ENCODE measurements at regions of chr15 and their contacts with region 1.

Region 1: DNA sequence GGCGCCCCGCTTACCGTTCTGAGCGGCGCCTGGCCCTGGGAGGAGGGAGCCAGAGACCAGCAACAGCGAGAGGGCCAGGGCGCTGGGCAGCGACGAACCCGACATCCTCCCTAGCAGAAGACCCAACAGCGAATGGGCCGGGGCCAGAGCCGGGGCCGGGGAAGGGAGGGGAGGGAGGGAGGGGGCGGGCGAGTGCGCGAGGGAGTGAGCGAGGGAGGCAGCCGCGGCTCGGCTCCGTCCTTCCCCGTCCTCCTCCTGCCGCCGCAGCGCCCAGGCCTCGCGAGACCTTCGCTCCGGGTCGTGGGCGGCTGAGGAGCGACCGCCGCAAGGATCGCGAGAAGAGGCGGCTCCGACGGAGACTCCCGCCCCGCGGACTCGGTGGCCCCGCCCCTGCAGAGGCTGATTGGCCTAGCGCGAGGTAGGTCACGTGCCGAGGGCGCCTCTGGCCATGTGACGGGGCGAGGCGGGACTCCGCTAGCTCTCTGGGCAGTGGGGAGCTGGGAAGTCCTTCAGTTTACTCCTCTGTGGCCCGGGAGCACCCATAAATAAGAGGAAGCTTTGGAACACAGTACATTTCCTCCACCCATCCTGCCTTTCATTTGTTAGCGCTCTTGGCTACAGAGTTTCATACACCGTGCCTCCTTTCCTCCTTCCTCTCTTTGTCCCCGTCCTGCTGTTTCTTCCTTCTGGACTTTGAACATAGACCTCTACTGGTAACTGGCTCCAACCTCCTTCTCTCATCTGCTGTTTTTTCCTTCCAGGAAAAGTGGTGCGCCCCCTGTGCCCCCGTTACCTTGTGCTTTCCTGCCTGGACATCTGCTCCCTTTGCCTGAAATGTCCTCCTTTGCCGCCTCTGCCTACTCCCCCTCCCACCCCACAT is at the start of gene NPTN:
- DNase-seq: peak; percentile 96 to 98
- ATAC-seq: peak; percentile 87 to 94
- H3K4me3 ChIP-seq: peak within 1 kb of the TSS; percentile 96
- H3K27ac ChIP-seq: peak within 1 kb of the TSS; percentile 95 to 96
- H3K4me1 ChIP-seq: peaks cover 51% of the 10 kb centered on the region
- CTCF ChIP-seq: peak; percentile 13; the same call in 1 of the 3 replicates
- EP300 ChIP-seq: no peak
- POLR2A ChIP-seq: peak; percentile 87
- RAD21 ChIP-seq: no peak
- polyA plus RNA-seq, gene NPTN: 201 and 253 TPM in 2 replicates

Region 2: DNA sequence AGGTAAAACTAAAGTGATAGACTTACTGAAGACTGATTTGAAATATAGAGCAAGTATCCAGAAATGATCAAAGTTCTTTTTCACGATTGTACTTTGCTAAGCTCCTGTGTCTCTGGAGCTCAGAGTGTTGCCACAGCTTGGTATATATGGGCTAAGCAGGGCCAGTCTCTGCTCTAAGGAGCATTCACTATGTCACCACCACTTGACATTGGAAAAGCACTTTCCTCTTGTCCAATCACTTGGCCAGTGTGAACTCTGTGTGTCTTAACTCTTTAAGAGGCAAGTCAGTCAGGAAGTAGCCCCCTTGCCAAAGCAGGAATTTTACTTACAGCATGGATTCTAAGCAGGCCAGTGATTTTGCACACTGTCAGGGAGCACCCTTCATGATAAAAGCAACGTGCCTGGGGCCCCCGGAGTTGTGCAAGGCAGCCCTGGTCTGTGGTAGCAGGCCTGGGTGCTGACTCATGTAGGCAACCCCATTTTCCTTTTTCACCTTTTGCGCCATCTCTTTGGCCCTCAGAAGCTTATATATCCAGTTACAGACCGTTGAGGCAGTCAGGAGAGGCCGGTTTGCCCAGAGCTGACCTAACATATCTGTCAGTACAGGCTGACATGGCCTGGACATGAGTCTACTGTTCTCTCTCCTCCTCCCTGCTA is 337.6 kb before region 1 on chr15:
- CTCF ChIA-PET with region 1: interaction called, 10 read pairs
- POLR2A ChIA-PET with region 1: no interaction called
- DNase-seq: no peak
- ATAC-seq: 0 out of 6 replicates have a peak, but pooled peaks of 1 of the 2 experiments have one; percentile 33
- H3K4me3 ChIP-seq: no peak overlapping the region
- H3K27ac ChIP-seq: no peak overlapping the region
- H3K4me1 ChIP-seq: no peaks in the 10 kb centered on the region
- CTCF ChIP-seq: no peak
- EP300 ChIP-seq: no peak
- POLR2A ChIP-seq: no peak
- RAD21 ChIP-seq: no peak

Region 3: GRCh38 chr15:73560501-73561117 is 72.7 kb before region 1 on chr15:
- CTCF ChIA-PET with region 1: interaction called, 211 read pairs
- POLR2A ChIA-PET with region 1: interaction called, 5 read pairs
- DNase-seq: peak; percentile 30 to 80
- ATAC-seq: peak; percentile 74 to 88; a peak in 5 of 6 replicates
- H3K4me3 ChIP-seq: no peak overlapping the region
- H3K27ac ChIP-seq: no peak overlapping the region
- H3K4me1 ChIP-seq: 0 out of 3 replicates have a peak, but pooled peaks cover 6% of the 10 kb centered on the region
- CTCF ChIP-seq: peak; percentile 87
- EP300 ChIP-seq: no peak
- POLR2A ChIP-seq: no peak
- RAD21 ChIP-seq: peak; percentile 83 to 88

Region 4: GRCh38 chr15:73593304-73594074 is 39.9 kb before region 1 on chr15:
- CTCF ChIA-PET with region 1: interaction called, 51 read pairs
- POLR2A ChIA-PET with region 1: no interaction called
- DNase-seq: no peak
- ATAC-seq: no peak
- H3K4me3 ChIP-seq: no peak overlapping the region
- H3K27ac ChIP-seq: no peak overlapping the region
- H3K4me1 ChIP-seq: no peaks in the 10 kb centered on the region
- CTCF ChIP-seq: no peak
- EP300 ChIP-seq: no peak
- POLR2A ChIP-seq: no peak
- RAD21 ChIP-seq: no peak

Region 5: DNA sequence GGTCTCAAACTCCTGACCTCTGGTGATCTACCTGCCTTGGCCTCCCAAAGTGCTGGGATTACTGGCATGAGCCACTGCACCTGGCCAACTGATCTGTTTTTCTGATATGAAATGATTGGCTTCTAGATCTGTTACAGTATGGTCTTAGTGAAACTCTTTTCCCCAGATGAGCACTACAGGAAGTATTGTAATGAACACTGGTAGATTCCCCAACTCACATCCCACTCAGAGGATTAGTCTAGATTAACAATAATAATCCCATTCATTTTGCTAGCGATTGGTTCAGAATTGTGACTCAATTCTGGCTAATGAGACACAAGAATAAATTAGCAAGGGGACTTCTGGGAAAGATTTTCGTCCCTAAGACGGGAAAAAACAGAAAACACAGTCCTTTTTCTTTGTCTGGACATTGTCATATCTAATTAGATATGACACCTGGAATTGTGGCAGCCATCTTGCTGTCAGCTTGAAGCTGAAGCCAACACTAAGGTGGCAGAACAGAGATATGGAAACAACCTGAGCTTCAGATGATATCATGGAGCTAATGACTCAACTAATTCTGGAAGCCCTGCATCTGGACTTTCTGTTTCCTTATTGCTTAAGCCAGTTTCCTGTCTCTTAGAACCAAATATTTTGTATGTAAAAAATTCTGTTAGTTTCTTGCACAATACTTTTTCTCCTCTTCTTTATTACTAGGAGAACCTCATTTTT is 17.2 kb after region 1 on chr15:
- CTCF ChIA-PET with region 1: interaction called, 36 read pairs
- POLR2A ChIA-PET with region 1: no interaction called
- DNase-seq: no peak
- ATAC-seq: 0 out of 6 replicates have a peak, but pooled peaks of 1 of the 2 experiments have one; percentile 24
- H3K4me3 ChIP-seq: no peak overlapping the region
- H3K27ac ChIP-seq: no peak overlapping the region
- H3K4me1 ChIP-seq: peaks cover 2% of the 10 kb centered on the region; the same call in 1 of the 3 replicates
- CTCF ChIP-seq: no peak
- EP300 ChIP-seq: no peak
- POLR2A ChIP-seq: no peak
- RAD21 ChIP-seq: no peak

Region 6: DNA sequence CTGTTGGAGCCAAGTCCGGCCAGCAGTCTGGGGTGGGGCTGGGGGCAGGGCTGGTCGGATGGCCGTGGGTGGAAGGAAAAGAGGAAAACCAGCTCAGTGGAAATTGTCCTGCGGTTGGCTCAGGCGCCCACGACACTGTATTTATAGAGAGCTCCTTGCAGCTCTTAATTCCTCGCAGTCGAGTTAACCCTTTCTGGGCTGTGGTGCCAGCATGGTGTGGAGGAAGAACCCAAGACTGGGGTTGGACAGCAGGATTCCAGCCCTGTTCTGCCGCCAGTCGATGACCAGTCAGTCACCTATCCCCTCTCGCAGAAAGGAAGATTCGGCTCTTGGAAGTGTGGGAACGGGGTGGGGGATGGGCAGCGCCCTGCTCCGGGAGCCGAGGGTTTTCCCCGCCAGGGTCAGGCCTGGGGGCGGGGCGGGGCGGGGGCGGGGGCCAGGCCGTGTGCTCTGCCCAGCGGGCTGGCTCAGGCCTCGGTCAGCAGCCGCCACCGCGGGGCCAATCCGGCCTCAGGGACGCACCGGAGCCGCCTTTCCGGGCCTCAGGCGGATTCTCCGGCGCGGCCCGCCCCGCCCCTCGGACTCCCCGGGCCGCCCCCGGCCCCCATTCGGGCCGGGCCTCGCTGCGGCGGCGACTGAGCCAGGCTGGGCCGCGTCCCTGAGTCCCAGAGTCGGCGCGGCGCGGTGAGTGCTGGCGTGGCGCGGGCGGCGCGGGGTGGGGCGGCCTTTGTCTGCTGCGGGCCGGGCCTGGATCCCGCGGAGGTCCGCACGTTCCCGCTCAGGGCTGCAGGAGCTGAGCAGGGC is 50.6 kb after region 1 on chr15 and contains the start of gene CD276:
- CTCF ChIA-PET with region 1: interaction called, 43 read pairs
- POLR2A ChIA-PET with region 1: no interaction called
- DNase-seq: peak; percentile 47 to 57
- ATAC-seq: peak; percentile 88 to 89
- H3K4me3 ChIP-seq: peak within 1 kb of the TSS; percentile 90
- H3K27ac ChIP-seq: peak within 1 kb of the TSS; percentile 88 to 97
- H3K4me1 ChIP-seq: peaks cover 29% of the 10 kb centered on the region
- CTCF ChIP-seq: no peak; the same call in 2 of the 3 replicates
- EP300 ChIP-seq: no peak
- POLR2A ChIP-seq: peak; percentile 34; the same call in 1 of the 2 replicates
- RAD21 ChIP-seq: no peak
- polyA plus RNA-seq, gene CD276: 24.8 and 32.8 TPM in 2 replicates

Region 7: GRCh38 chr15:73832657-73833056 is 199.3 kb after region 1 on chr15:
- CTCF ChIA-PET with region 1: no interaction called
- POLR2A ChIA-PET with region 1: no interaction called
- DNase-seq: no peak
- ATAC-seq: no peak
- H3K4me3 ChIP-seq: no peak overlapping the region
- H3K27ac ChIP-seq: no peak overlapping the region
- H3K4me1 ChIP-seq: no peaks in the 10 kb centered on the region
- CTCF ChIP-seq: no peak
- EP300 ChIP-seq: no peak
- POLR2A ChIP-seq: no peak
- RAD21 ChIP-seq: no peak

Measured in A549 (cell line).